ENCODE measurements at regions of chr1 and their contacts with region 1.

Region 1: GRCh38 chr1:109773146-109773899 is 9.6 kb upstream of the EPS8L3 start:
- DNase-seq: peak; percentile 34 to 66
- H3K4me3 ChIP-seq: no peak overlapping the region
- H3K27ac ChIP-seq: no peak overlapping the region
- H3K4me1 ChIP-seq: peaks cover 0 to 4% (median 0%) of the 10 kb centered on the region in 4 experiments; a peak in 1 of 7 replicates
- H3K27me3 ChIP-seq: no peaks in the 10 kb centered on the region; a peak in 2 of 7 replicates
- CTCF ChIP-seq: peak; percentile 93 to 97 (median 95)
- EP300 ChIP-seq: no peak
- POLR2A ChIP-seq: no peak
- RAD21 ChIP-seq: peak; percentile 97

Region 2: GRCh38 chr1:109548321-109549267 is 224.7 kb before region 1 on chr1 and contains the start of gene GNAI3:
- CTCF ChIA-PET with region 1: interaction called, 40 read pairs
- POLR2A ChIA-PET with region 1: interaction called, 3 read pairs
- DNase-seq: peak; percentile 82 to 95
- H3K4me3 ChIP-seq: peak within 1 kb of the TSS; percentile 81 to 91 (median 90)
- H3K27ac ChIP-seq: peak within 1 kb of the TSS; percentile 83
- H3K4me1 ChIP-seq: peaks cover 0 to 8% (median under 1%) of the 10 kb centered on the region in 4 experiments; a peak in 5 of 7 replicates
- H3K27me3 ChIP-seq: no peaks in the 10 kb centered on the region
- CTCF ChIP-seq: peak in 1 of 3 experiments; percentile 1; a peak in 1 of 4 replicates
- EP300 ChIP-seq: no peak
- POLR2A ChIP-seq: peak; percentile 62 to 91
- RAD21 ChIP-seq: peak in 1 of 2 experiments; percentile 4; a peak in 1 of 4 replicates
- total RNA-seq, gene GNAI3: 9.2 and 9.8 TPM in 2 replicates

Region 3: DNA sequence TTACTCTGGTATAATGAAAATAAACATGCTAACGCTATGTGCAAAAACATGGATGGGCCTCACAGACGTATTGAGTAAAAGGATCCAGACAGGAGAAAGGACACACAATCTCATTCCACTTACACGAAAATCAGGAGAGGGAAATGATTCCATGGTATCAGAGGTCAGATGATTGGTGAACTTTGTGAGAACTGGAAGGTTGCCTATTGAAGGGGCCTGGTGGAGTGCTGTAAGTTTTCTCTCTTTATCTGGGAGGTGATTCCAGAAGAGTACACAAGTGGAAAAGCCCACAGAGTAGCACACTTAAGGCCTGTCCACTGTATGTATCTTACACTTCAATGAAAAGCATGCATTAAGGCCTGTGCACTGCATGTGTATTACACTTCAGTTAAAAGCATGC is 95.9 kb before region 1 on chr1:
- CTCF ChIA-PET with region 1: no interaction called
- POLR2A ChIA-PET with region 1: no interaction called
- DNase-seq: no peak
- H3K4me3 ChIP-seq: no peak overlapping the region
- H3K27ac ChIP-seq: no peak overlapping the region
- H3K4me1 ChIP-seq: no peaks in the 10 kb centered on the region
- H3K27me3 ChIP-seq: no peaks in the 10 kb centered on the region
- CTCF ChIP-seq: no peak
- EP300 ChIP-seq: no peak
- POLR2A ChIP-seq: no peak
- RAD21 ChIP-seq: no peak

Region 4: DNA sequence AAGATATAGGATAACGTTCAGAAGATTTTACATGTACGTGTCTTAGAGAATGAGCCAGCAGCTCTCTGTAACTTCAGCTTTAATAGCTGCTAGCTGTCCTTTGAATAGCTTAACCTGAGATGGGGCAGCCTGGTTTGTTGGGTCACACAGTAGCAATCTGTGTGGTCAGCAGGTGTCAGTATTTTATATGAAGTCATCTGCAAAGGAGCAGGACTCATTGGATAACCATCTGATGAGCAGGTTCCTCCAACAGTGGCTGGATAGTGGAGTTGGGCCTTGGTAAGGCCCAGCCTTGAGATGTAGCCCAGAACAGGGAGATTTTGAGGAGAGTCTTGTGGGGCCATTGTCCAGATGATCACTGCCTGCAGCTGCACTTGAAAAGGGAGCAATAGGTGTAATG is 54.8 kb before region 1 on chr1:
- CTCF ChIA-PET with region 1: interaction called, 51 read pairs
- POLR2A ChIA-PET with region 1: no interaction called
- DNase-seq: no peak
- H3K4me3 ChIP-seq: no peak overlapping the region
- H3K27ac ChIP-seq: no peak overlapping the region
- H3K4me1 ChIP-seq: no peaks in the 10 kb centered on the region
- H3K27me3 ChIP-seq: no peaks in the 10 kb centered on the region
- CTCF ChIP-seq: peak in 1 of 3 experiments; percentile 10; a peak in 1 of 4 replicates
- EP300 ChIP-seq: no peak
- POLR2A ChIP-seq: no peak
- RAD21 ChIP-seq: peak; percentile 29 to 50

Region 5: DNA sequence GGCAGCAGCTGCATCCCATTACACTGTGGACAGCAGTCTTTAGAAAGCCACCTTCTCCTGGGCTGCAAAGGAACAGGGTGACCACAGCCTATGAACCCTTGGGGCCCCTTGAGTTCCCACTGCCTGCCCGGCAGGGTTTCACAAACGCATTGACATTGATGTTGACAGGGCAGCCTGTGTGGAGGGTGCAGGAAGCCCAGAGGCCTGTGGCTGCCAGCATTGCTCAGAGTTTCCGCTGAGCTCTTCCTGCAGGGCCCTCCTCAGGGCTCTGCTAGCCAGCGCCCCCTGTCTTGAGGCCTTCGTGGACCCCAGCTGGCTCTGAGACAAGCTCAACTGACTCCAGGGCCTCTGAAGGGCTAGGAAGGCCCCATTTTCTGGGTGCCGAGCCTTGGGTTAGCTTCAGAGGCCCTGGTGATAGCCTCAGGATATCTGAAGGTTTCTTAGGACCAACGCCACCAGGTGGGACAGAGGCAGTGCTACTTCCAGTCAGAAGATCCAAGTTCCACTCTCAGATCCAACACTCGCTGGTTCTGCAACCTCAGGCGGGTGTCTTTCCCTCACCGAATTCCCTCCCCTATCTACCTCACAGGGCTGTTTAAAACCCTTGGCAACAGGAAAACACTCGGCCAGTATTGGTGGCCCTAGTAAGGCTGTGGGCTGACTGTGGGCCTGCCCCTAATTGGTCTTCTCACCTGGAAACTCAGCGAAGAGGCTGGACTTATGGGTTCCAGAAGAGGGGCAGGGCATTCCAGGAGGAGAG is 17.6 kb after region 1 on chr1:
- CTCF ChIA-PET with region 1: interaction called, 218 read pairs
- POLR2A ChIA-PET with region 1: no interaction called
- DNase-seq: no peak
- H3K4me3 ChIP-seq: no peak overlapping the region
- H3K27ac ChIP-seq: no peak overlapping the region
- H3K4me1 ChIP-seq: peaks cover 0 to 18% (median 7%) of the 10 kb centered on the region in 4 experiments; a peak in 6 of 7 replicates
- H3K27me3 ChIP-seq: peaks cover 0 to 3% (median 2%) of the 10 kb centered on the region in 4 experiments; a peak in 2 of 7 replicates
- CTCF ChIP-seq: peak; percentile 31 to 65 (median 54)
- EP300 ChIP-seq: no peak
- POLR2A ChIP-seq: no peak
- RAD21 ChIP-seq: peak; percentile 14 to 50; a peak in 3 of 4 replicates

Region 6: GRCh38 chr1:109886827-109887226 is 113.5 kb after region 1 on chr1:
- CTCF ChIA-PET with region 1: interaction called, 22 read pairs
- POLR2A ChIA-PET with region 1: no interaction called
- DNase-seq: no peak
- H3K4me3 ChIP-seq: no peak overlapping the region
- H3K27ac ChIP-seq: no peak overlapping the region
- H3K4me1 ChIP-seq: peaks cover 0 to 3% (median under 1%) of the 10 kb centered on the region in 4 experiments; a peak in 3 of 7 replicates
- H3K27me3 ChIP-seq: no peaks in the 10 kb centered on the region; a peak in 1 of 7 replicates
- CTCF ChIP-seq: no peak
- EP300 ChIP-seq: no peak
- POLR2A ChIP-seq: no peak
- RAD21 ChIP-seq: no peak

Region 7: GRCh38 chr1:109931189-109931731 is 157.9 kb after region 1 on chr1:
- CTCF ChIA-PET with region 1: interaction called, 113 read pairs
- POLR2A ChIA-PET with region 1: no interaction called
- DNase-seq: peak; percentile 60 to 89
- H3K4me3 ChIP-seq: no peak overlapping the region
- H3K27ac ChIP-seq: peak overlapping the region; percentile 59; the same call in 1 of the 2 replicates
- H3K4me1 ChIP-seq: peaks cover 4 to 9% (median 5%) of the 10 kb centered on the region in 4 experiments; a peak in 6 of 7 replicates
- H3K27me3 ChIP-seq: no peaks in the 10 kb centered on the region
- CTCF ChIP-seq: no peak
- EP300 ChIP-seq: peak; percentile 67 to 79; a peak in 2 of 3 replicates
- POLR2A ChIP-seq: peak in 1 of 2 experiments; percentile 49; a peak in 1 of 3 replicates
- RAD21 ChIP-seq: peak; percentile 30 to 47; a peak in 3 of 4 replicates

Region 8: DNA sequence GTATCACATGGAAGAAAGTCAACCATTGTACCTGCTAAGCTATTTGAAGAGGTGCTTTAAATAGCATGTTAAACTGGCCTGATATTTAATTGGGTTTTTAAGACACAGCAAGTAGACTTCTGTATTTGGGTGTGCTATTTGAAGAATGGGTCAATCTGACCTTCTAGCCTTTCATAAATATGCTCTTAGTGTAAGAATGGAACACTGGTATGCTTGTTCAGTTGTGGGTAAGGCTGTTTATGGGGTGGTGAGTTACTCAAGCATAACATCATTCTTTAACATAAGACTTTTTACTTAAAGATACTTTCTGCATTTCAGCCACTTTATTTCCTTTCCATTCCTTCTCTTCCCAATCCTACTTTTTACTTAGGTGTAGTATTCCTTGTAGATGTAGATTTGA is 232.6 kb after region 1 on chr1:
- CTCF ChIA-PET with region 1: interaction called, 32 read pairs
- POLR2A ChIA-PET with region 1: no interaction called
- DNase-seq: no peak
- H3K4me3 ChIP-seq: no peak overlapping the region
- H3K27ac ChIP-seq: no peak overlapping the region
- H3K4me1 ChIP-seq: peaks cover 9 to 25% (median 19%) of the 10 kb centered on the region in 4 experiments; a peak in 6 of 7 replicates
- H3K27me3 ChIP-seq: no peaks in the 10 kb centered on the region
- CTCF ChIP-seq: no peak
- EP300 ChIP-seq: no peak
- POLR2A ChIP-seq: no peak
- RAD21 ChIP-seq: no peak

Measured in H1 (cell line).